ENCODE measurements at regions of chr4 and their contacts with region 1.

Region 1: DNA sequence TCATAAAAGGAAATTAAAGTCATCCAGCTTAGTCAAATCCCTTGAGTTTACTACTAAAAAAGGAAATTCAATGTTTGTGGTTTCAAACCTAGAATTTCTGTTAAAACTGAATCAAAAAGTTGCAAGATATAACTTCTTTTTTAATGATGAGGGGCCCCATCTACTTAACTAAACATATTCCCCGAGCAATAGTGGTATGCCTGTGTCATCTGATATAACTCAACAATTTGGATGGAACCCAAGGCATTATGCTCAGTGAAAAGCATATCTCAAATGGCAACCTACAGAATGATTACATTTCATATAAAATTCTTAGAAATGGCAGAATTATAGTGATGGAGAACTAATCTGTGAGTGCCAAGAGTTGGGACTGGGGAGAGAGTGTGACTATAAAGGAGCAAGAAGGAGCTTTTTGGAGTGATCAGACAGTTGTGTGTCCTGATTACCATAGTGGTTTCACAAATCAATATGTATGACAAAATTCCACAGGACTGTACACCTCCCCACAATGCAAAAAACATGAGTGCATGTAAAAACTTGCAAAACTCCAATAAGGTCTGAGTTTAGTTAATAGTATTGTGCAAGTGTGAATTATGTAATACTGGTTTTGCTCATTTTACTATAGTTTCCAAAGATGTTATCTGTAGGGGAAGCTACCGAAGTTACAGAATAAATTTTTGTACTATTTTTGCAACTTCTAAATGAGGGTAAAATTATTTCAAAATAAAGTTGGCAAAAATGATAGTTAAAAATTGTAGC is 323.2 kb downstream of the ARHGAP24 start:
- DNase-seq: no peak
- ATAC-seq: peak in 1 of 8 donors; percentile 8
- H3K4me3 ChIP-seq: no peak overlapping the region
- H3K27ac ChIP-seq: no peak overlapping the region
- H3K4me1 ChIP-seq: peaks cover 1 to 29% (median 21%) of the 10 kb centered on the region in 9 donors
- H3K27me3 ChIP-seq: no peaks in the 10 kb centered on the region
- CTCF ChIP-seq: no peak

Region 2: GRCh38 chr4:85391589-85392410 is 406.4 kb before region 1 on chr4:
- intact Hi-C with region 1: no loop called
- DNase-seq: no peak
- ATAC-seq: no peak
- H3K4me3 ChIP-seq: no peak overlapping the region
- H3K27ac ChIP-seq: peak overlapping the region in 3 of 10 donors; percentile 34 to 49 (median 42)
- H3K4me1 ChIP-seq: peaks cover 0 to 24% (median 12%) of the 10 kb centered on the region in 9 donors
- H3K27me3 ChIP-seq: no peaks in the 10 kb centered on the region
- CTCF ChIP-seq: no peak

Region 3: DNA sequence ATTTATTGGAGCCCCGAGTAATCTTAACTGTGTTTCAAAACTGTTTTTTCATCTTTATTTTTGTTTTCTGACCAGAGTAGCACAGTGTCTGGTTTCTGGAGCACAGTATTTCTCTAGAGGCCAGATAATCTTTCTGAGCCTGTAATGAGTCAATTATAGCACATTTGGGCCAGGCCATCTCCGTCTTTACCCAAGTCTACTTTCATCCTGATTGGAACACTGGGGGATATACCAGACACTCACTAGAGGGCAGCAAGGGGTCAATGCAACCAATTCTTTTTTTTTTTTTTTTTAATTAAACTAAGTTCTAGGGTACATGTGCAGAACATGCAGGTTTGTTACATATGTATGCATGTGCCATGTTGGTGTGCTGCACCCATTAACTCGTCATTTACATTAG is 41.3 kb before region 1 on chr4:
- intact Hi-C with region 1: no loop called
- DNase-seq: peak in 1 of 2 donors; percentile 61
- ATAC-seq: peak in 6 of 8 donors; percentile 38 to 84 (median 65)
- H3K4me3 ChIP-seq: no peak overlapping the region
- H3K27ac ChIP-seq: no peak overlapping the region
- H3K4me1 ChIP-seq: peaks cover 0 to 41% (median 25%) of the 10 kb centered on the region in 9 donors
- H3K27me3 ChIP-seq: no peaks in the 10 kb centered on the region
- CTCF ChIP-seq: peak in 7 of 9 donors; percentile 45 to 67 (median 53)

Region 4: DNA sequence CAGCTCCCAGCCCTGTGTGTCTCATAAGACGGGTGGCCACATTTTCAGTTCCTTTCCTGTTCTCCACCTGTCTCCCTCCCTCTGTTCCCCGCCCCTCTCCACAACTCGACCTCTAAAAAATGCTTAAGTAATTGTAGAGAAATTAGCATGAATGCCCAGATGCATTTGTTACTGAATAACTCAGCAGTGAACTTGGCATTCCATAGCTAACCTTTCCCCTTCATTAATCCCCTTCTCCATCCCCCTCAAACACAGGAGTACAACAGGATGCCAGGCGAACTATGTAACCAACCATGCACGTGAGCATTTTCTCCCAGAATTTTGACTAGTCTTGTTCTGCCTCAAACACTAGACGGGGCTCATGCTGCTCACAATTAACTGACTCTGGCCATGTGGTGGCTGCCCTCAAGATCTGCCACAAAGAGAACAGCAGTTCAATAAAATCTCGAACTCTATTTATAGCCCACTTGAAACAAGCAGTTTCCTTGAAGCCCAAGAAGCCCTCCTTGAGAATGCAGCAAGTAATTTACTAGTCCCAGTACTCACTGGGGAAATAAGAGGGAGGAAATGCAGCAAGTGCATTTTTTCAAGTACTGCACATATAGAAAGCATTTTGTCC is 28.0 kb after region 1 on chr4:
- intact Hi-C with region 1: loop called in 1 of 10 experiments (anchors 2 kb)
- DNase-seq: peak in 1 of 2 donors; percentile 19
- ATAC-seq: peak in 7 of 8 donors; percentile 44 to 66 (median 53)
- H3K4me3 ChIP-seq: no peak overlapping the region
- H3K27ac ChIP-seq: peak overlapping the region in 7 of 10 donors; percentile 18 to 68 (median 44)
- H3K4me1 ChIP-seq: peaks cover 15 to 70% (median 37%) of the 10 kb centered on the region in 9 donors
- H3K27me3 ChIP-seq: no peaks in the 10 kb centered on the region
- CTCF ChIP-seq: peak in 6 of 9 donors; percentile 11 to 56 (median 27)